SK-N-SH (cell line): ENCODE measurements at regions of chr17 and their contacts with region 1.

Region 1: DNA sequence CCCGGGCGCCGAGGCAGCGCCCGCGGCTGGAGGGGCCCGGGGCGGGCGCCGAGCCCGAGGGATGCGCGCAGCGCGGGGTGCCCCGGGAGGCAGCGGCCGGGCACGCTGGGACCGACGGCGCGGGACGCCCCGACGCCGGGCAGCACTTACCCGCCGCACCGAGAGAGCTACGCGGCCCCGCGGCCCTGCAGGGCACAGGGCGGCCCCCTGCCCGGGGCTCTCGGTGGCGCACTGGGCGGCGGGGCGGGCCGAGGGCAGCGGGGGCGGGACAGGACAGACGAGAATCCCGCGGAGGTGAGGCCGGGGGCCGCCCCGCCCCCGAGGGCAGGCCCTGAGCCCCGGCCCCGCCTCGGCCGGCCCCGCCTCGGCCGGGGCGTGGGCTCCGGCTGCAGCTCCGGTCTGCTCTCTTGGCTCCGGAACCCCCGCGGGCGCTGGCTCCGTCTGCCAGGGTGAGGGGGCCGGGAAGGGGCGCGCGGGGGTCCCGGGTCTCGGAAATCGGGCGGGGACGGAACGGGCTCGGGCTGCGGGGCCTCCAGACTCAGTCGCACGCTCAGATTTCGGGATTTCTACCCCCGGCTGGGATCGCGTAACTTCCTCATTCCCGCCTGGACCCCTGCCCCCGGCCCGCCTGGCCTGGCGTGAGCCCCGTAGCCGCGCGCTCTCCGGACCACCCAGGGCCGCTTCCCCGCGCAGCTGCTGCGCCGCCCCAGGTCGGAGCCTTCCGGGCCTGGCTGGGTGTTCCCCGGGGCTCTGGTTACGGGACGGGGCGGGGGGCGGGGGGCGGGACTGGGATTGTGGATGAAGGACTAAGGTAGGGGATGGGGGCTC is at the start of gene PLD2:
- DNase-seq: peak; percentile 100
- H3K4me3 ChIP-seq: peak within 1 kb of the TSS; percentile 63 to 92
- H3K27ac ChIP-seq: peak within 1 kb of the TSS in 1 of 2 experiments; percentile 41; a peak in 2 of 4 replicates
- H3K4me1 ChIP-seq: peaks cover 0 to 8% of the 10 kb centered on the region in 2 experiments; a peak in 1 of 4 replicates
- H3K27me3 ChIP-seq: no peaks in the 10 kb centered on the region
- CTCF ChIP-seq: no peak
- EP300 ChIP-seq: no peak
- RAD21 ChIP-seq: no peak
- polyA plus RNA-seq, gene PLD2: 42.5 and 49.2 TPM in 2 replicates

Region 2: DNA sequence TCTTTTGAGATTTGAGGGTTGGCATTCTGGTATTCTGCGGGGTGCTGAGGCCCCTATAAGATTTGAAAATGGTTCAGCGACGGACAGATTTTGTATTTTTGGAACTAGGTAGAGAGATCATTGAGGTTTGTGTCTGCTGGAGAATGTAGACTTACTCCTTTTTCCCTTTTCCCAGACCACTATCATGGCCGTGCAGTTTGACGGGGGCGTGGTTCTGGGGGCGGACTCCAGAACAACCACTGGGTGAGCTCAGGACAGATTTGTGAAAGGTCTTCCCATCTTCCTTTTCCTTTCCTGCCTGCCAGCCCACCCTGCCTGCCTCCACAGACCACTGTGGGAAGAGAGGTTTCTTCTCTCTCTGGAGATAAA is 10.5 kb before region 1 on chr17:
- CTCF ChIA-PET with region 1: interaction called, 3 read pairs
- POLR2A ChIA-PET with region 1: interaction called, 11 read pairs
- DNase-seq: peak; percentile 75
- H3K4me3 ChIP-seq: peak overlapping the region; percentile 81 to 95
- H3K27ac ChIP-seq: peak overlapping the region; percentile 78 to 80
- H3K4me1 ChIP-seq: peaks cover 0 to 8% of the 10 kb centered on the region in 2 experiments; a peak in 1 of 4 replicates
- H3K27me3 ChIP-seq: no peaks in the 10 kb centered on the region
- CTCF ChIP-seq: no peak
- EP300 ChIP-seq: no peak
- RAD21 ChIP-seq: no peak

Region 3: DNA sequence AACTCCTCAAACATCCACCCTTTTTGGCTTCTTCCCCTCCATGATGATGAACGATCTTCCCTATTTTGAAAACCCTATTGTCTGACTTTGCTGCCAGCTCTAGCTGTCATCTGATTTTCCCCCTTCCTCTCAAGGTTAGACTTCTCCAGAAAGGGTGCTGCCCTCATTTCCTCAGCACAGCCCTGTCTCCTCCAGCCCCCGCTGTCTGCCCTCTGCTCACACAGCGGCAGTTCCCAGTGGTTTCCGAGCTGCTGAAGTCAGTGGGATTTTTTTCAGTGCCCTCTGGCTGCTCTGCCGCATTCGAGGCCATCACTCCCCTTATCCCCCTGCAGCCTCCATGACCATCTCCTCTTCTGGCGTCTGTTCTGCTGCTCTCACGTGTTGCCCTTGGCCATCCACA is 65.8 kb after region 1 on chr17:
- CTCF ChIA-PET with region 1: no interaction called
- POLR2A ChIA-PET with region 1: no interaction called
- DNase-seq: peak; percentile 71
- H3K4me3 ChIP-seq: no peak overlapping the region
- H3K27ac ChIP-seq: peak overlapping the region in 1 of 2 experiments; percentile 12; a peak in 2 of 4 replicates
- H3K4me1 ChIP-seq: peaks cover 0 to 4% of the 10 kb centered on the region in 2 experiments; a peak in 1 of 4 replicates
- H3K27me3 ChIP-seq: no peaks in the 10 kb centered on the region
- CTCF ChIP-seq: no peak
- EP300 ChIP-seq: no peak
- RAD21 ChIP-seq: no peak